CD4-positive, alpha-beta T cell (primary cell): ENCODE measurements at regions of chr16 and their contacts with region 1.

Region 1: DNA sequence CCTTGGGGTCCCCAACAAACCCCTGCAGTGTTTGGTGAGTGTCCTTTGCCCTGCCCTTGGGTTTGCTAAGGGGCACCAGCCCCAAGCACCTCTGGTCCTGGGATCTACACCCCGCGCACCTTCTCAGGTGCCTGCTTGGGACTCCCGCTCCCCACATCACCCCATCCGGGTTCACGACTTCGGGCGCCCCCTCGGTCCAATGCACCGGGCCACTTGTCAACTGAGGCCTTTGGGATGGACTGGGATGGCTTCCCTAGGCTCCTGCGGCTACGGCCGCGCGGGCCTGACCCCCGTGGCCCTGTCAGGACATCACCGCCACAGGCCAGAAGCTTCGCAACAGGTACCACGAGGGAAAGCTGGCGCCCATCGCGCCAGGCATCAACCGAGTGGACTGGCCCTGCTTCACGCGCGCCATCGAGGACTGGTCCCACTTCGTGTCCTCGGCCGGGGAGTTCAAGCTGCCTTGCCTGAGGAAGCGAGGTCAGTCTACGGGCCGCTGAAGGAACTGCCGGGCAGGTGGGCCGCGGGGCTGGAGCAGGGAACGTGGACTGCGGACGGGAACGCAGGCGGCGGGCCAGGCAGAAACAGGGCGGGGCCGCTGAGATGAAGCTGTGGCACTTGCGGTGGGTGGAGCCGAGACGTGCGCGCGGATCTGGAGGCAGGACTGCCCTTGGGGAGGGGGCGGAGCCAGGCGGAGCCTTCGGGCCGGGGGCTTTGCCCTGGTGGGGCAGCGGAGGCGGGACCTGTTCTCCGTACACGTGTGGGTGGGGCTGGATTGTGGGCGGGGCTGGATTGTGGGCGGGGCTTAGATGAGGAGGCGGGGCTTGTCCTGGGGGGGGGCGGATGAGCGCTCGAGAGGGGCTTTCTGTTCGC is 13.6 kb upstream of the CNGB1 start:
- DNase-seq: peak; percentile 85 to 97 (median 92)
- ATAC-seq: peak; percentile 98
- H3K4me3 ChIP-seq: peak overlapping the region; percentile 81
- H3K4me3 Mint-ChIP-seq: peak overlapping the region; percentile 94
- H3K27ac ChIP-seq: peak overlapping the region; percentile 29 to 50
- H3K27ac Mint-ChIP-seq: peak overlapping the region; percentile 56
- H3K4me1 ChIP-seq: peaks cover 22% of the 10 kb centered on the region
- H3K4me1 Mint-ChIP-seq: peaks cover 15% of the 10 kb centered on the region
- H3K27me3 ChIP-seq: no peaks in the 10 kb centered on the region
- H3K27me3 Mint-ChIP-seq: no peaks in the 10 kb centered on the region
- CTCF ChIP-seq: no peak

Region 2: GRCh38 chr16:56450986-56451752 is 1533.4 kb before region 1 on chr16 and contains the starts of genes NUDT21 and OGFOD1:
- CTCF ChIA-PET with region 1: no interaction called
- POLR2A ChIA-PET with region 1: no interaction called
- intact Hi-C with region 1: no loop called
- DNase-seq: peak; percentile 81 to 98 (median 88)
- ATAC-seq: peak; percentile 98
- H3K4me3 ChIP-seq: peak within 1 kb of the TSS; percentile 91
- H3K4me3 Mint-ChIP-seq: peak within 1 kb of the TSS; percentile 92
- H3K27ac ChIP-seq: peak within 1 kb of the TSS; percentile 58 to 80
- H3K27ac Mint-ChIP-seq: peak within 1 kb of the TSS; percentile 83
- H3K4me1 ChIP-seq: peaks cover 20% of the 10 kb centered on the region
- H3K4me1 Mint-ChIP-seq: peaks cover 70% of the 10 kb centered on the region
- H3K27me3 ChIP-seq: no peaks in the 10 kb centered on the region
- H3K27me3 Mint-ChIP-seq: no peaks in the 10 kb centered on the region
- CTCF ChIP-seq: no peak
- total RNA-seq, gene NUDT21: 89.6 to 96.6 TPM
- total RNA-seq, gene OGFOD1: 14.6 to 14.8 TPM

Region 3: GRCh38 chr16:57899771-57900661 is 84.6 kb before region 1 on chr16:
- CTCF ChIA-PET with region 1: no interaction called
- POLR2A ChIA-PET with region 1: no interaction called
- intact Hi-C with region 1: loop called in 1 of 2 experiments (anchors 5 kb)
- DNase-seq: peak; percentile 62 to 90 (median 78)
- ATAC-seq: peak; percentile 67
- H3K4me3 ChIP-seq: no peak overlapping the region
- H3K4me3 Mint-ChIP-seq: no peak overlapping the region
- H3K27ac ChIP-seq: no peak overlapping the region
- H3K27ac Mint-ChIP-seq: no peak overlapping the region
- H3K4me1 ChIP-seq: peaks cover 4% of the 10 kb centered on the region
- H3K4me1 Mint-ChIP-seq: peaks cover 6% of the 10 kb centered on the region
- H3K27me3 ChIP-seq: peaks cover 0 to 6% of the 10 kb centered on the region in 2 experiments
- H3K27me3 Mint-ChIP-seq: peaks cover 24% of the 10 kb centered on the region
- CTCF ChIP-seq: peak; percentile 83

Region 4: DNA sequence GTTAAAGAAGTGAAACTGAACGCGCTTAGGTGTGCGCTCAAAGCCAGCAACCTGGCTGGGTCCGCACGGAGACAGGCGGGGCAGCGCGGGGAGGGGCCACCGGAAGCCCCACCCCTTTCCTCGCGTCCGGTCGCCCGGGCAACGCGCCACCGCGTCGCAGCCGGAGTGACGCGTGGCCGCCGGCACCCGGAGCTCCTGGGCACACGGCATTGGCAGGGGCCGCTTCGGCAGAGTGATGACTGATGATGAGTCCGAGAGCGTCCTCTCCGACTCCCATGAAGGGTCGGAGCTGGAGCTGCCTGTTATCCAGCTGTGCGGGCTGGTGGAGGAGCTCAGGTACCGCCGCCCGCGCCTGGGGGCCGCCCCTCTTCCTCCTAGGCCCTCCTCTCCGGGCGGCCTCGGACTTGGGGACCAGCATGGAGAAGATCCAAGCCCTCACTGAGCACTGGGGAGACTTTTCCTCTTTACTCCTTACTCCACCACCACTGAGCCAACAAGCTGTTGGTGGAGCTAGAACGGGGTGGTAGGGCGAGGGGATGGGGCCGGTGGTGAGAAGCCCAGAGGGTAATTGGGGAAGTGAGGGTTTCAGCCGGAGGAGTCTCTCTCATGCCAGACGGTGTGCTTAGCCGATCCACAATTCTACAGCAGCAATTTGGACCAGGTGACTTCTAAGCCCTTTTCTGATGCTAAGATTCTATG is 265.4 kb after region 1 on chr16:
- CTCF ChIA-PET with region 1: no interaction called
- POLR2A ChIA-PET with region 1: no interaction called
- intact Hi-C with region 1: loop called in 1 of 2 experiments (anchors 5 kb)
- DNase-seq: peak; percentile 65 to 94 (median 82)
- ATAC-seq: peak; percentile 98
- H3K4me3 ChIP-seq: peak overlapping the region; percentile 73
- H3K4me3 Mint-ChIP-seq: peak overlapping the region; percentile 84
- H3K27ac ChIP-seq: no peak overlapping the region
- H3K27ac Mint-ChIP-seq: no peak overlapping the region
- H3K4me1 ChIP-seq: peaks cover 16% of the 10 kb centered on the region
- H3K4me1 Mint-ChIP-seq: peaks cover 14% of the 10 kb centered on the region
- H3K27me3 ChIP-seq: no peaks in the 10 kb centered on the region
- H3K27me3 Mint-ChIP-seq: peaks cover 8% of the 10 kb centered on the region
- CTCF ChIP-seq: no peak